ENCODE measurements at regions of chr1 and their contacts with region 1.

Region 1: DNA sequence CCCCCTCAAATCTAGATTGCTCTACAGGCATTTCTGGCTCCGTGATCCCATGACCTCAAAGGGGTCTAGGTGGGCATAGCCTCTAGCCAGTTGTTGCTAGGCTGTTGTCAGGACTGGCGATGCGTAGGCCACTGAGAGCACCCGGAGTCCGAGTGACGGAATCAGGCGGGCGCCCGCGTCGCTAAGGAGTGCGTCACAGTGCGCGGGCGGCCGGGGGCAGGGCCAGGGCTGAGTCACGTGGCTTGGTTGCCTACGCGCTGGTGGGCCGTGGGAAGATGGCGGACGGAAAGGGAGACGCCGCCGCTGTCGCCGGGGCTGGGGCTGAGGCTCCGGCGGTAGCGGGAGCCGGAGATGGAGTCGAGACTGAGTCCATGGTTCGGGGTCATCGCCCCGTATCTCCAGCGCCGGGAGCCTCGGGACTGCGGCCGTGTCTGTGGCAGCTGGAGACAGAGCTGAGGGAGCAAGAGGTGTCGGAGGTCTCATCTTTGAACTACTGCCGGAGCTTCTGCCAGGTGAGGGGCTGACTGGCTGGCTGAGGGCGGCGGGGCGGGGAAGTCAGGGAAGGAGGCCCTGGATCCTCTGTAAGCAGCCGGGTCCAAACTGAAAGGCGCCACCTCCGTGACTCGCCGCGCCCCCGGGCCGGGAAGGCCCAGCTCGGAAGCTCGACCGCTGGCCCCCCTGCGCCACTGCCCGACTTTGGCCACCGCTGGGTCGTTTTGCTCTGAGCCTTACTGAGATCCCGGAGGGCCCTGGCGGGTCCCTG is at the start of gene RLF:
- DNase-seq: peak; percentile 93 to 98 (median 95)
- ATAC-seq: peak; percentile 92
- H3K4me3 ChIP-seq: peak within 1 kb of the TSS; percentile 94
- H3K27ac ChIP-seq: peak within 1 kb of the TSS; percentile 89
- H3K4me1 ChIP-seq: peaks cover 4 to 24% of the 10 kb centered on the region in 2 experiments
- H3K27me3 ChIP-seq: no peaks in the 10 kb centered on the region
- CTCF ChIP-seq: peak in 1 of 3 experiments; percentile 12; a peak in 1 of 6 replicates
- EP300 ChIP-seq: peak; percentile 70
- POLR2A ChIP-seq: peak; percentile 95
- RAD21 ChIP-seq: no peak
- polyA plus RNA-seq, gene RLF: 3.6 to 5.6 TPM

Region 2: GRCh38 chr1:40183055-40183710 is 21.9 kb after region 1 on chr1:
- CTCF ChIA-PET with region 1: no interaction called
- POLR2A ChIA-PET with region 1: interaction called, 6 read pairs
- in situ Hi-C with region 1: no loop called
- intact Hi-C with region 1: loop called (anchors 2 kb)
- DNase-seq: peak; percentile 21 to 68 (median 30)
- ATAC-seq: peak; percentile 85
- H3K4me3 ChIP-seq: no peak overlapping the region
- H3K27ac ChIP-seq: peak overlapping the region; percentile 26; the same call in 2 of the 3 replicates
- H3K4me1 ChIP-seq: peaks cover 22 to 38% of the 10 kb centered on the region in 2 experiments; a peak in 4 of 5 replicates
- H3K27me3 ChIP-seq: no peaks in the 10 kb centered on the region
- CTCF ChIP-seq: peak; percentile 43 to 76 (median 64); a peak in 5 of 6 replicates
- EP300 ChIP-seq: no peak
- POLR2A ChIP-seq: no peak
- RAD21 ChIP-seq: peak; percentile 28 to 61; a peak in 3 of 4 replicates

Region 3: DNA sequence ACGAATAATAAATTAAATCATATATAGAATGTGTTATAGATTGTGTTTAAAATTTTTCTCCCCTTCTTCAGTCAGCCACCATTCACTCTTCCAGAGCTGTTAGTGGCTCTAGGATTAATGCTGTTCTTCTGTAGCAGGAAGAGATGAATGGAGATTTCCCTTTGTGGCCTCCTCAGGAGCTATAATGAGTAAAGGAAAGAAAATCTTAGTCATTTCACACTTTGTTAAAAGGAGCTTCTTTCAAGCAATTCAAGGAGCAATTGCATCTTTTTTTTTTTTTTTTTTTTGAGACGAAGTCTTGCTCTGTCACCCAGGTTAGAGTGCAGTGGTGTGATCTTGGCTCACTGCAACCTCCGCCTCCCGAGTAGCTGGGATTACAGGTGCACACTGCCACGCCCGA is 62.7 kb after region 1 on chr1:
- CTCF ChIA-PET with region 1: no interaction called
- POLR2A ChIA-PET with region 1: no interaction called
- in situ Hi-C with region 1: no loop called
- intact Hi-C with region 1: no loop called
- DNase-seq: no peak
- ATAC-seq: no peak
- H3K4me3 ChIP-seq: no peak overlapping the region
- H3K27ac ChIP-seq: no peak overlapping the region
- H3K4me1 ChIP-seq: peaks cover 12 to 20% of the 10 kb centered on the region in 2 experiments; a peak in 4 of 5 replicates
- H3K27me3 ChIP-seq: no peaks in the 10 kb centered on the region
- CTCF ChIP-seq: no peak
- EP300 ChIP-seq: no peak
- POLR2A ChIP-seq: no peak
- RAD21 ChIP-seq: no peak

Region 4: DNA sequence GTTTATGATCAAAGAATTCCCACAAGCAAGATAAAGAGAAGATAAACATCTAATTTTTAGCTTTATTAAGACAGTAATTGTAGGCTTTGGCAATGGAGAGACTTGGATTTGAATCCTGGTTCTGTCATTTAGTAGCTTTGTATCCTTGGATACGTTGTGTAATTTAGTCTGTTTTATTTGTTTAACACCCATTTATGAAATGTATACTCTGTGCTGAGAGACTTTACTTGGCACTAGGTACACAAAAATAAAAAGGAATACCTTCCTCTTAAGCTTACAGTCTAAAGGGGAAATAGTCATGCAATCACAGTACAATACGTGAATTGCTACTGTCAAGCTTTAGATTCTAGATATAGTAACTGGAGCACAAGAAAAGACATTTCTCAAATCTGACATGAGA is 120.5 kb after region 1 on chr1:
- CTCF ChIA-PET with region 1: no interaction called
- POLR2A ChIA-PET with region 1: no interaction called
- in situ Hi-C with region 1: no loop called
- intact Hi-C with region 1: no loop called
- DNase-seq: no peak
- ATAC-seq: no peak
- H3K4me3 ChIP-seq: no peak overlapping the region
- H3K27ac ChIP-seq: no peak overlapping the region
- H3K4me1 ChIP-seq: peaks cover 0 to 3% of the 10 kb centered on the region in 2 experiments; a peak in 2 of 5 replicates
- H3K27me3 ChIP-seq: no peaks in the 10 kb centered on the region
- CTCF ChIP-seq: no peak
- EP300 ChIP-seq: no peak
- POLR2A ChIP-seq: no peak
- RAD21 ChIP-seq: no peak